ENCODE measurements at regions of chr10 and their contacts with region 1.

Region 1: DNA sequence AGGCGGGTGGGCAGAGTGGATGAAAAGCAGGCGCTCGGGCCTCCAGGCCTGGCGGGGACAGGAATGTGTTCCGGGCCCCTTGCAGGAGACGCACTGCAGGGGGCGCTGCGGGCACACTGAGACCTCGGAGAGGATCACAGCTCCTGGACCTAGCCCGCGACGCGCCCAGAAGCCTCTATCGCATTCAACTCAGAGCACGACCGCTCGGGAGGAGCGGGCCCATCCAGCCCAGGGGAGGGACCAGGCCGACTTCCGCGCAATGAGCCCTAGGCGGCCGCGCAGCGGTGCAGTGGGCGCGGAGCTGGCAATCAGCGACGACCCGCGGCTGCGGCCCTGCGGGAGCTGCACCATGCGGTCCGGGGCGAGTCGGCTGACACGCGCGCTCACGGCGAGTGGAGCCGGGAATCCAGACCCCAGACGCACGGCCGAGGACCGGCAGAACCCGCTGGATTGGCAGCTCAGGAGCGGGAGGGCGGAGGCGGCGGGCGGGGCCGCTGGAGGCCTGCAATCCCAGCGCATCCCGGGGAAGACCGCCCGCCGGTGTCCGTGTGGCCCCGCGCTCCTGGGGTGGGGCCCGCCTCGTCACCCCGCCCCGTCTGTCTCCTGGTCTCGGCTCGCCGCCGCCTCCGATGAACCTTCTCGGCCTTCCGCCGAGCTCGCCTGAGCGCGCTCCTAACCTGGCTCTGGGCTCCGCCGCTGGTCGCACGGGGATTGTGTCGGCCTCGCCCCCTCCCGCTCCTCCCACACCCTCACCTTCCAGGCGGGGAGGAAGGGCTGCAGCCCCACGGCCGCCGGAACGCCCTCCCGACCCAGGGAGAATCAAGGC is 33.5 kb upstream of the GRID1 start:
- DNase-seq: peak; percentile 96

Region 2: DNA sequence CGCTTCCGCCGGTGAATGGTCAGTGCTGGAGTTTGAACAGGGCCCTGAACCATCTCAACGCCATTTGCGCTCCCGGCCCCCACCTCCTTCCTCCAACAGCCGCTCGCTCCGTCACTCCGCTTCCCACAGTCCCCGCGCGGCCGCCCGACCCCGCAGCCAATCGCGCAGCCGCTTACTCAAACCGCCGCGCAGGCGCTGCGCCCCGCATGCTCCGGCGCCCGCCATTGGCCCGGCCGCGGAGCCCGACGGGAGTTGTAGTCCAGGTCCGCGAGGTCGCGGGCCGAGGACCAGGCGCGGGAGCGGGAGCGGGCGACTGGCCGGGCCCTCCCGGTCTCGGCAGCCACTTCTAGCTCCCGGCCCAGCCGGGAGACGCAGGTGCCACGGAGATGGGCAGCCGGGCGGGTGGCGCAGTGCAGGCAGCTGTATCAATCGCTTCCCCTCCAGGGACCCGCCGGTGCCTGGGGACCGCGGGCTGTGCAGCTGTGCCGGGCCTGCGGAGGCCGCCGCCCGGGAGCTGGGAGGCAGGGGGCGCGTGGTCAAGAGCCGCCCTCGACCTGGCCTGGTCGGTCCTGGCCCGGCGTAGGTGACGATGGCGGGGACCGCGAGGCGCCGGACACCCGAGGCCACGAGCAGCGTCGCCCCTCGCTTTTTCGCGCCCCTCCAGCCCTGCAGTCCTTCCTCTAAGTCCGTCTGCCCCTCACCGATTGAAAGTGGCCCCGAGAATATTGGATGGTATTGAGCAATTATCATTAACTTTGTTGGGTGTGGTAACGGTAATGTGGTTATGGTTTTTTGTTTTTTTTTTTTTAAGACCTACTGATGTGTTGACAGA is 121.8 kb after region 1 on chr10 and contains the start of gene WAPL:
- intact Hi-C with region 1: loop called (anchors 5 kb)
- DNase-seq: peak; percentile 98
- total RNA-seq, gene WAPL: 24.0 TPM

Measured in cardiac septum (tissue), 1 donor.